ENCODE measurements at regions of chr21 and their contacts with region 1.

Region 1: GRCh38 chr21:42164064-42164789 is 54.7 kb upstream of the ABCG1 start:
- DNase-seq: peak; percentile 73
- ATAC-seq: peak; percentile 82
- H3K4me3 ChIP-seq: no peak overlapping the region
- H3K4me3 Mint-ChIP-seq: no peak overlapping the region
- H3K27ac ChIP-seq: no peak overlapping the region
- H3K27ac Mint-ChIP-seq: peak overlapping the region; percentile 43
- H3K4me1 ChIP-seq: peaks cover 8 to 15% of the 10 kb centered on the region in 2 donors
- H3K4me1 Mint-ChIP-seq: peaks cover 14% of the 10 kb centered on the region
- H3K27me3 ChIP-seq: peaks cover 0 to 5% (median 2%) of the 10 kb centered on the region in 4 experiments
- H3K27me3 Mint-ChIP-seq: peaks cover 3% of the 10 kb centered on the region
- CTCF ChIP-seq: peak; percentile 73

Region 2: DNA sequence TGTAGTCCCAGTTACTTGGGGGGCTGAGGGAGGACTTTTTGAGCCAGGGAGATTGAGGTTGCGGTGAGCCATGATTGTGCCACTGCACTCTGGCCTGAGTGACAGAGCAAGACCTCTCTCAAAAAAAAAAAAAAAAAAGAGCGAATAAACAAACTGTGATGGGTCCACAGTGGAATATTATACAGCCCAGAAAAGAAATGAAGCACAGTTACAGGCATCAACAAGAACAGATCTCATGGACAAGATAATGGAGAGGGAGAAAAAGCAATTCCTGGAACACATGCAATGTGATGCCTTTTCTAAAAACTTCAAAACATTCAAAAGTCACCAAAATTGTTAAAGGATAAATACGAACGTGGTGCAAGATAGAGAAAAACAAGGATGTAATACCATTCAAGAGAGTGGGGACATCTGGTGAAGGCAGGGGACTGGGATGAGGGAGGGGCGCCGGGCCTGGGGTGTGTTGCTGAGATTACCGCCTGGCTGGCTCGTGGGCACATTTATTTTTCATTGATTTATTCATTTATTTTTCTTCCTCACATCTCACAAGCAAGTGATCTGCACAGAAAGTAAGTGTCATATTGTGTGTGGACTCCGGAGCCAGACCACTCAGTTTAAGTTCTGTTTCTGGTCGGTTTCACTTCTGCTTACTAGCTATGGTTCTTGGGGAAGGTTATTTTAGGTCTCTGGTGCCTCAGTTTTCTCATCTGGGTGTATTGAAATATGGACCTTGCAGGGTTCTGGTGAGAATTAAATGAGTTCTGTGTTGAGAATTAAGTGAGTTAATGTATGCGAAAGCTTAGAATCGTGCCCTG is 84.8 kb after region 1 on chr21:
- CTCF ChIA-PET with region 1: interaction called, 21 read pairs
- POLR2A ChIA-PET with region 1: no interaction called
- intact Hi-C with region 1: no loop called
- DNase-seq: peak; percentile 81
- ATAC-seq: peak; percentile 96
- H3K4me3 ChIP-seq: no peak overlapping the region
- H3K4me3 Mint-ChIP-seq: peak overlapping the region; percentile 24
- H3K27ac ChIP-seq: peak overlapping the region in 1 of 2 donors; percentile 19
- H3K27ac Mint-ChIP-seq: peak overlapping the region; percentile 50
- H3K4me1 ChIP-seq: peaks cover 22 to 51% of the 10 kb centered on the region in 2 donors
- H3K4me1 Mint-ChIP-seq: peaks cover 67% of the 10 kb centered on the region
- H3K27me3 ChIP-seq: no peaks in the 10 kb centered on the region
- H3K27me3 Mint-ChIP-seq: no peaks in the 10 kb centered on the region
- CTCF ChIP-seq: no peak

Region 3: GRCh38 chr21:42337830-42338728 is 173.9 kb after region 1 on chr21:
- CTCF ChIA-PET with region 1: interaction called, 4 read pairs
- POLR2A ChIA-PET with region 1: no interaction called
- intact Hi-C with region 1: loop called (anchors 10 kb)
- DNase-seq: peak; percentile 84
- ATAC-seq: peak; percentile 98
- H3K4me3 ChIP-seq: no peak overlapping the region
- H3K4me3 Mint-ChIP-seq: no peak overlapping the region
- H3K27ac ChIP-seq: no peak overlapping the region
- H3K27ac Mint-ChIP-seq: peak overlapping the region; percentile 11
- H3K4me1 ChIP-seq: peaks cover 7 to 8% of the 10 kb centered on the region in 2 donors
- H3K4me1 Mint-ChIP-seq: peaks cover 8% of the 10 kb centered on the region
- H3K27me3 ChIP-seq: peaks cover 0 to 10% (median 6%) of the 10 kb centered on the region in 4 experiments
- H3K27me3 Mint-ChIP-seq: peaks cover 17% of the 10 kb centered on the region
- CTCF ChIP-seq: peak; percentile 79

Region 4: DNA sequence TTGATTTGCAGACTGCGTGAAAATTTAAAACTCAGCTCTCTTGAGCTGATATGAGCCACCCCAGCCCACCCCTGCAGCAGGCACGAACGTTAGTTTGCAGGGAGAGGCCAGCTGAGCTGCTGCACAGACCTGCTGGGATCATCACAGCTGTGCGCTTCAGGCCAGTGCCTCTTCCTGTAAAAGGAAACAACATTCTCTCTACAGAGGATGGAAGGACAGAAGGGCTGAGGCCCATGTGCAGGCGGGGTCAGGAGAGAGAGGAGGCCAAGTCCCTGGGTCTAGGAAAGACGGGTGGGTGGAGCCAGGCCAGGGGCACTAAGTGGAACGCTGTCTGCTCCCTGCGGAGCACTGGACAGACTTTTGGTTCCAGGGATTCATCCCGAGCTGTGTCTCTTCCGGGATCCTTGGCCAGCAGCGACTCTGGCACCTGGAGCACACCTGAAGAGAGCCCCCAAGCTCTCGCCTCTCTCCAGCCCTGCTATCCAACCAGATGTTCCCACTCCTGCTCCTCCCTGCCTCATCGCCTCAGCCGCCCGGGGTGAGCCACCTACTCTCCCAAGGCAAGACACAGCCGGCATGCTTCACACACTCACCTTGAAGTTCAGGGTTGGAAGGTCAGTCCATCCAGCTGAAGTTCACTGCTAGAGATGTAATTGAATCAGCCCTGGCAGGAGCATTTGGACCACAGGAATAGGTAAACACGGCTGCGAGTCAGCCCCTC is 289.4 kb after region 1 on chr21:
- CTCF ChIA-PET with region 1: interaction called, 11 read pairs
- POLR2A ChIA-PET with region 1: no interaction called
- intact Hi-C with region 1: no loop called
- DNase-seq: no peak
- ATAC-seq: no peak
- H3K4me3 ChIP-seq: no peak overlapping the region
- H3K4me3 Mint-ChIP-seq: no peak overlapping the region
- H3K27ac ChIP-seq: no peak overlapping the region
- H3K27ac Mint-ChIP-seq: no peak overlapping the region
- H3K4me1 ChIP-seq: peaks cover 0 to 9% of the 10 kb centered on the region in 2 donors
- H3K4me1 Mint-ChIP-seq: peaks cover 6% of the 10 kb centered on the region
- H3K27me3 ChIP-seq: peaks cover 0 to 12% (median 2%) of the 10 kb centered on the region in 4 experiments
- H3K27me3 Mint-ChIP-seq: no peaks in the 10 kb centered on the region
- CTCF ChIP-seq: no peak

Measured in B cell (primary cell).